ENCODE measurements at regions of chr7 and their contacts with region 1.

Region 1: GRCh38 chr7:74289018-74289658 is at the start of gene CLIP2:
- DNase-seq: peak; percentile 83
- H3K4me3 ChIP-seq: peak within 1 kb of the TSS; percentile 74
- H3K27ac ChIP-seq: no peak within 1 kb of the TSS
- H3K4me1 ChIP-seq: peaks cover 38% of the 10 kb centered on the region
- CTCF ChIP-seq: no peak
- total RNA-seq, gene CLIP2: 3.6 and 4.2 TPM in 2 replicates

Region 2: GRCh38 chr7:74269757-74270277 is 19.3 kb before region 1 on chr7:
- CTCF ChIA-PET with region 1: no interaction called
- POLR2A ChIA-PET with region 1: interaction called, 8 read pairs
- intact Hi-C with region 1: loop called (anchors 1 kb)
- DNase-seq: peak; percentile 83
- H3K4me3 ChIP-seq: peak overlapping the region; percentile 65
- H3K27ac ChIP-seq: no peak overlapping the region
- H3K4me1 ChIP-seq: peaks cover 65% of the 10 kb centered on the region
- CTCF ChIP-seq: no peak

Region 3: GRCh38 chr7:74365322-74366022 is 76.3 kb after region 1 on chr7:
- CTCF ChIA-PET with region 1: interaction called, 10 read pairs
- POLR2A ChIA-PET with region 1: no interaction called
- intact Hi-C with region 1: no loop called
- DNase-seq: peak; percentile 75
- H3K4me3 ChIP-seq: no peak overlapping the region
- H3K27ac ChIP-seq: no peak overlapping the region
- H3K4me1 ChIP-seq: peaks cover 11% of the 10 kb centered on the region
- CTCF ChIP-seq: no peak

Region 4: DNA sequence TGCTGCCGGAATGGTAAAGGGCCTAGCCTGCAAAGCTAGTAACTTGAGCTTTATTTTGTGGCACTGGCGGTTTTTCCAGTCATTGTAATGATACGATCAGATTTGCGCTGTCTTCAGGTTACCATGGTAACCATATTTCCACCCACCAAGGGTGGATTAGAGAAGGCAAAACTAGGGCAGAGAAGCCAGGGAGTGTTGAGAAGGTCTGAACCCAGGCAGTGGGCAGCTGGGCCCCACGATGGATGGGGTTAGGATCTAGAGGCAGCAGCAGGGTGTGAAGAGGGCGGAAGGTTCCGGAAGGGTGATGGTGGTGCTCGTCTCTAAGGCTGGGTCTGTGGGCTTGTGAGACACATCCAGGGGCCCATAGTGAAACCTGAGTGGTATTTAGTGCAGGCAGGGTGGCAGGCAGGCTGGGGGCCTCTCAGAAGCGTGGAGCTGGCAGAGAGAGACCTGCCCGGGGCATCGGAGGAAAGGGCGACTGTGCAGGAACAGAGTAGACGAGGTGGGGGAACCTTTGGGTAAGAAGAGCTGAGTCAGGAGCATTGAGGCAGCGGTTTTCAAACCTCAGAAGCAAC is 280.4 kb after region 1 on chr7:
- CTCF ChIA-PET with region 1: no interaction called
- POLR2A ChIA-PET with region 1: no interaction called
- intact Hi-C with region 1: no loop called
- DNase-seq: no peak
- H3K4me3 ChIP-seq: no peak overlapping the region
- H3K27ac ChIP-seq: no peak overlapping the region
- H3K4me1 ChIP-seq: peaks cover 11% of the 10 kb centered on the region
- CTCF ChIP-seq: no peak

Measured in OCI-LY7 (cell line).